GM12878 (cell line): ENCODE measurements at regions of chr3 and their contacts with region 1.

Region 1: GRCh38 chr3:17195856-17196604 is 311.3 kb downstream of the PLCL2 start:
- DNase-seq: peak; percentile 83
- ATAC-seq: peak; percentile 91
- H3K4me3 ChIP-seq: no peak overlapping the region
- H3K27ac ChIP-seq: peak overlapping the region; percentile 54
- H3K4me1 ChIP-seq: peaks cover 25% of the 10 kb centered on the region
- H3K27me3 ChIP-seq: no peaks in the 10 kb centered on the region
- CTCF ChIP-seq: peak; percentile 32 to 49 (median 32); a peak in 4 of 6 replicates
- EP300 ChIP-seq: peak; percentile 61 to 89; a peak in 3 of 4 replicates
- POLR2A ChIP-seq: no peak
- RAD21 ChIP-seq: peak; percentile 51

Region 2: GRCh38 chr3:16828815-16829214 is 367.2 kb before region 1 on chr3:
- CTCF ChIA-PET with region 1: interaction called, 4 read pairs
- POLR2A ChIA-PET with region 1: no interaction called
- RAD21 ChIA-PET with region 1: interaction called, 6 read pairs
- SMC1A ChIA-PET with region 1: interaction called, 15 read pairs
- in situ Hi-C with region 1: no loop called
- intact Hi-C with region 1: no loop called
- DNase-seq: no peak
- ATAC-seq: peak; percentile 90
- H3K4me3 ChIP-seq: no peak overlapping the region
- H3K27ac ChIP-seq: no peak overlapping the region
- H3K4me1 ChIP-seq: peaks cover 8% of the 10 kb centered on the region
- H3K27me3 ChIP-seq: no peaks in the 10 kb centered on the region
- CTCF ChIP-seq: peak; percentile 58 to 65 (median 60)
- EP300 ChIP-seq: no peak
- POLR2A ChIP-seq: no peak
- RAD21 ChIP-seq: peak; percentile 93

Region 3: GRCh38 chr3:16897254-16897926 is 298.6 kb before region 1 on chr3:
- CTCF ChIA-PET with region 1: no interaction called
- POLR2A ChIA-PET with region 1: no interaction called
- RAD21 ChIA-PET with region 1: no interaction called
- SMC1A ChIA-PET with region 1: interaction called, 3 read pairs
- in situ Hi-C with region 1: no loop called
- intact Hi-C with region 1: loop called (anchors 5 kb)
- DNase-seq: peak; percentile 52
- ATAC-seq: peak; percentile 79
- H3K4me3 ChIP-seq: peak overlapping the region; percentile 47; the same call in 1 of the 2 replicates
- H3K27ac ChIP-seq: peak overlapping the region; percentile 79
- H3K4me1 ChIP-seq: peaks cover 26% of the 10 kb centered on the region
- H3K27me3 ChIP-seq: no peaks in the 10 kb centered on the region
- CTCF ChIP-seq: no peak
- EP300 ChIP-seq: peak in 1 of 2 experiments; percentile 47; a peak in 1 of 4 replicates
- POLR2A ChIP-seq: no peak
- RAD21 ChIP-seq: no peak

Region 4: DNA sequence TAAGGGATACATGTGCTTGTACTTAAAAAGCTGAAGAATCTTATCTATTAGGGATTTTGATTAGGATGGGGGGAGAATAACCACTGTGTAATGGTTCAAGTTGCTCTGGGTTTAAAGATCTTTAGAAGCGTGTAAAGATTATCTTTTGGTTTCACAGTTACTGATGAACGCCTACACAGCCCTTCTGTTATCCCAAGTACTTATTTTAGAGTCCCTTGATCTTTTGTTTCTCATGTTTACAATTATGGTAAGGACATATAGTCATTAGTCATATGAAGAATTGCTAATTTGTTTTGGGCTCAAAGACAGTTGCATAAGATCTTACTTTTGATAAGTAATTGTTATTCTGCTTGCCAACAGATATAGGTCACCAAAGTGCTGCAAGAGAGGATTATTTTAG is 151.2 kb before region 1 on chr3:
- CTCF ChIA-PET with region 1: interaction called, 4 read pairs
- POLR2A ChIA-PET with region 1: interaction called, 3 read pairs
- RAD21 ChIA-PET with region 1: interaction called, 9 read pairs
- SMC1A ChIA-PET with region 1: interaction called, 5 read pairs
- in situ Hi-C with region 1: no loop called
- intact Hi-C with region 1: loop called (anchors 5 kb)
- DNase-seq: no peak
- ATAC-seq: peak; percentile 84
- H3K4me3 ChIP-seq: no peak overlapping the region
- H3K27ac ChIP-seq: peak overlapping the region; percentile 72
- H3K4me1 ChIP-seq: peaks cover 38% of the 10 kb centered on the region
- H3K27me3 ChIP-seq: no peaks in the 10 kb centered on the region
- CTCF ChIP-seq: no peak
- EP300 ChIP-seq: peak; percentile 85 to 87; a peak in 3 of 4 replicates
- POLR2A ChIP-seq: no peak
- RAD21 ChIP-seq: 0 out of 2 replicates have a peak, but pooled peaks have one; percentile 5

Region 5: DNA sequence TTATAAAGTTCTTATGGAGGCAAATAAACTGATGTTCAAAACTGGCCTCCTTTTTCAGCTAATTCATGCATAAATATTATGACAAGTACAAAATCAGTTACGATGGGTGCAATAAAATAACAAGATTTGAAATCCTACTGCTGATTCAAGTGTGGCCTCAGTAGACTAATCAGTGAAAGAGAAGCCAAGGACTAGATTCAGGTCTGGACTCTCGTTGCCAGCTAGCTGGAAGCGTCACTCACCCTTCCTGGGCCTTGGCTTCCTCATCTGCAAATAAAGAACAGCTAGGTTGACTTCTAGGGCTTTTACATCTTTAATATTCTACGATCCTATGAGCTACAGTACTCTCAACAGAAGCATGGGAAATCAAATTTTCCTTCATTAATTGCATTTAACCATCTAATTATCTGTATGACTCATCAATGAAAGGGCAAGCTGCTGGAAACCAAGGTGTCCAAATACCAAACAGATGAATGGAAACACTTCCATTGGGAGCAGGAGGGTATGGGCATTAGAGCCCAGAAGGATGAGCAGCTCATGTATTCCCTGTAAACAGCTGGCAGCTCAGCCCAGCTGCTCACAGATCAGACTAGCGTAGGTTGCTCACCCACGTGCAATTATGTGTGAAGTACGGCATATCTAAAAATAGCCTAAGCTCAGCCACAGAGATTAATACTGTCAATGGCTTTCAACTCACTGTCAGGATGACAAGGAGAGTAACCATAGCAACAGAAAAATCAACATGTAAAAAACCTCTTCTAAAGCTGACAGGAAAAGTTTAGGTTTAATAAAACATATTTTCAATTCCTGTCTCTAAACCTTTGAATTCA is 16.4 kb before region 1 on chr3:
- CTCF ChIA-PET with region 1: interaction called, 43 read pairs
- POLR2A ChIA-PET with region 1: interaction called, 24 read pairs
- RAD21 ChIA-PET with region 1: interaction called, 62 read pairs
- SMC1A ChIA-PET with region 1: interaction called, 105 read pairs
- in situ Hi-C with region 1: no loop called
- intact Hi-C with region 1: loop called (anchors 2 kb)
- DNase-seq: peak; percentile 56
- ATAC-seq: peak; percentile 84
- H3K4me3 ChIP-seq: no peak overlapping the region
- H3K27ac ChIP-seq: no peak overlapping the region
- H3K4me1 ChIP-seq: peaks cover 38% of the 10 kb centered on the region
- H3K27me3 ChIP-seq: no peaks in the 10 kb centered on the region
- CTCF ChIP-seq: no peak
- EP300 ChIP-seq: peak; percentile 82 to 97
- POLR2A ChIP-seq: no peak
- RAD21 ChIP-seq: no peak

Region 6: DNA sequence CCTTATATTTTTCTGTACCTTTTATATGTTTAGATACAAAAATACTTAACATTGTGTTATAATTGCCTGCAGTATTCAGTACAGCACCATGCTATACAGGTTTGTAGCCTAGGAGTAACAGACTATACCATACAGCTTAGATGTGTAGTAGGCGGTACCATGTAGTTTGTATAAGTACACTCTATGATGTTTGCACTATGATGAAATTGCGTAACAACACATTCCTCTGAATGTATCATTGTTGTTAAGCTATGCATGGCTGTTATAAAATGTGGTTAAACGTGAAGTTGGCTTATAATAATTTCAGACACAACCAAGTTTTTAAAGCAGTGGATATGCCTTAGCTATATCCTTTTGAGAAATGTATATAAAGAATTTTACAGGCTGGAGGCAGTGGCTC is 17.1 kb after region 1 on chr3:
- CTCF ChIA-PET with region 1: interaction called, 11 read pairs
- POLR2A ChIA-PET with region 1: no interaction called
- RAD21 ChIA-PET with region 1: interaction called, 13 read pairs
- SMC1A ChIA-PET with region 1: interaction called, 45 read pairs
- in situ Hi-C with region 1: no loop called
- intact Hi-C with region 1: no loop called
- DNase-seq: no peak
- ATAC-seq: no peak
- H3K4me3 ChIP-seq: no peak overlapping the region
- H3K27ac ChIP-seq: no peak overlapping the region
- H3K4me1 ChIP-seq: no peaks in the 10 kb centered on the region
- H3K27me3 ChIP-seq: no peaks in the 10 kb centered on the region
- CTCF ChIP-seq: no peak
- EP300 ChIP-seq: no peak
- POLR2A ChIP-seq: no peak
- RAD21 ChIP-seq: no peak

Region 7: GRCh38 chr3:17233398-17233800 is 37.4 kb after region 1 on chr3:
- CTCF ChIA-PET with region 1: interaction called, 98 read pairs
- POLR2A ChIA-PET with region 1: interaction called, 3 read pairs
- RAD21 ChIA-PET with region 1: interaction called, 30 read pairs
- SMC1A ChIA-PET with region 1: interaction called, 65 read pairs
- in situ Hi-C with region 1: no loop called
- intact Hi-C with region 1: loop called (anchors 1 kb)
- DNase-seq: peak; percentile 51
- ATAC-seq: peak; percentile 99
- H3K4me3 ChIP-seq: no peak overlapping the region
- H3K27ac ChIP-seq: no peak overlapping the region
- H3K4me1 ChIP-seq: peaks cover 12% of the 10 kb centered on the region; the same call in 1 of the 2 replicates
- H3K27me3 ChIP-seq: no peaks in the 10 kb centered on the region
- CTCF ChIP-seq: peak; percentile 50 to 77 (median 65); a peak in 5 of 6 replicates
- EP300 ChIP-seq: no peak
- POLR2A ChIP-seq: no peak
- RAD21 ChIP-seq: peak; percentile 99

Region 8: DNA sequence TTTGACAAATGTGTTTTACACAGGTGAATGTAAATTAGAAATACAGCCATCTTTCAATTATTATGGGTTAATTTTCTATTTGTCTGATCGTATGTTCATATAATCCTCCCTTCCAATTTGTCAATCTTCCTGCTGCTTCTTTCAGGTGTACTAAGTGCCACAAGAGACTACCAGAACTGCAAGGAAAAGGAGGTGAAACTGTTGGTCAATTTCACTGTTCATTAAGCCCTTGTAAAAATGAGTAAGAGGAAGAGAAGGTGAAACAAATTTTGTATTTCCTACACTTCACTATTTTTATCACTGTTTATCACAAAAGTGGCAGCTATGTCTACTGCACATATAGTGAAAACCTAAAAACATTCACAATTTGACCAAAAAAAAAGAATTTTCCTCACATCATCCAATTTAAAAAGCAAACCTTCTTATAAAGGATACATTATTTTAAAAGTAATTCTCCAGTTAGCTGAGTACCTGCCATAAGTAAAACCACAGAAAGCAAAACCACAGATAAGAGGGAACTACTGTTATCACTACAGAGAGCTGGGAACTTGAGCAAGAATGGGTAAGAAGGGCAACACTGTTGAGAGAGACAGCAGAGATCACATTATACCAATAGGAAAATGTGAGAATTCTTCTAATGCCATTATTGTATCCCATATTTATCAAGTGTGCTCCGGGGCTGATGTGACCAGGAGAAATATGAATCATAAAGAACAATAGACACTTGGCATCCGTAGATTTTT is 383.4 kb after region 1 on chr3:
- CTCF ChIA-PET with region 1: no interaction called
- POLR2A ChIA-PET with region 1: no interaction called
- RAD21 ChIA-PET with region 1: no interaction called
- SMC1A ChIA-PET with region 1: no interaction called
- in situ Hi-C with region 1: no loop called
- intact Hi-C with region 1: no loop called
- DNase-seq: peak; percentile 60
- ATAC-seq: peak; percentile 98
- H3K4me3 ChIP-seq: no peak overlapping the region
- H3K27ac ChIP-seq: no peak overlapping the region
- H3K4me1 ChIP-seq: peaks cover 31% of the 10 kb centered on the region
- H3K27me3 ChIP-seq: no peaks in the 10 kb centered on the region
- CTCF ChIP-seq: no peak
- EP300 ChIP-seq: peak; percentile 31 to 67; a peak in 2 of 4 replicates
- POLR2A ChIP-seq: no peak
- RAD21 ChIP-seq: no peak